Activated B cell treated with CpG ODN at 0.5 μM for 24 hours (primary cell): ENCODE measurements at regions of chr2 and their contacts with region 1.

Region 1: GRCh38 chr2:10122386-10123280 is at the start of gene RRM2:
- DNase-seq: peak; percentile 77
- ATAC-seq: peak; percentile 82
- H3K4me3 Mint-ChIP-seq: peak within 1 kb of the TSS; percentile 97
- H3K27ac Mint-ChIP-seq: peak within 1 kb of the TSS; percentile 12
- H3K4me1 Mint-ChIP-seq: peaks cover 35% of the 10 kb centered on the region
- H3K27me3 Mint-ChIP-seq: peaks cover 8% of the 10 kb centered on the region
- CTCF ChIP-seq: no peak
- total RNA-seq, gene RRM2: 8.6 and 9.3 TPM in 2 replicates

Region 2: GRCh38 chr2:8870441-8870840 is 1252.2 kb before region 1 on chr2:
- CTCF ChIA-PET with region 1: no interaction called
- POLR2A ChIA-PET with region 1: no interaction called
- intact Hi-C with region 1: no loop called
- DNase-seq: no peak
- ATAC-seq: no peak
- H3K4me3 Mint-ChIP-seq: no peak overlapping the region
- H3K27ac Mint-ChIP-seq: no peak overlapping the region
- H3K4me1 Mint-ChIP-seq: peaks cover 10% of the 10 kb centered on the region
- H3K27me3 Mint-ChIP-seq: no peaks in the 10 kb centered on the region
- CTCF ChIP-seq: no peak

Region 3: DNA sequence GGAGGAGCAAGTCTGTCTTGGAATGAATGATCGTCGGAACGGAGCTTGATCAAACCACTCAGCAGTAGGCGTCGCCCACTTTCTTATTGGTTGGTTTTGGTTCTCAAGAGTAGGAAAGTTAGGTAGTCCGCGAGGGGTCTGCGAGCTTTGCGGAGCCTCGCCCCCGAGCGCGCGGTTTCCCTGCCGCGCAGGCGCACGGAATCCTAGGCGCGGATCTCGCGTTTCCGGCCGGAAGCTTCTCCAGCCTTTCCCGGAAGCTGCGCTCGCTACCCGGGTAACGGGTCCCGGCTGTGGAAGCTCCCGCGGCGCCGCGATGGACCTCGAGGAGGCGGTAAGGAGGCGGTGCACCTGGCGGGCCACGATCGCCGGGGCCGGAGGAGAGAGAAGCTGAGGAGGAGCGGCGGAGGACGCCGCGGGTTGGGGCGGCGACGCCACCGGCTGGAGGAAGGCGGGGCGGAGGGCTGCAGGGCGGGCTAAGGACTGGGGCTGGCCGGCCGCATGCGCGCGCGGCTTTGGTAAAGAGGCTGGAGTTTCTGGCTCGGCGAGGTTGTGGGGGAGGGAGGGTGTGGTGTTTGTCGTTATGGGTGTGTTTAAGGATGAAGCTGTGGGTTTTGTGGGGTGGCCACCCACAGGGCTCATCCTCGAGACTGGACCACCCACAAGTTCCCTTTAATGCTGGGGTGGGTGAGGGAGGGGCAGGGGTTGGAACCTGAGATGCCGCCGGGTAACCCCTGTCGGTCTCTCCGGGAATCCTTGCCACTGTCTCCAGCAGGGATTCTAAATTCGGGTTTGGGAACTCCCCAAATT is 279.2 kb before region 1 on chr2 and contains the start of gene TAF1B:
- CTCF ChIA-PET with region 1: no interaction called
- POLR2A ChIA-PET with region 1: no interaction called
- intact Hi-C with region 1: loop called (anchors 2 kb)
- DNase-seq: peak; percentile 86
- ATAC-seq: peak; percentile 87
- H3K4me3 Mint-ChIP-seq: peak within 1 kb of the TSS; percentile 94
- H3K27ac Mint-ChIP-seq: peak within 1 kb of the TSS; percentile 91
- H3K4me1 Mint-ChIP-seq: peaks cover 34% of the 10 kb centered on the region
- H3K27me3 Mint-ChIP-seq: no peaks in the 10 kb centered on the region
- CTCF ChIP-seq: no peak
- total RNA-seq, gene TAF1B: 26.4 and 28.7 TPM in 2 replicates

Region 4: GRCh38 chr2:9984217-9984739 is 138.4 kb before region 1 on chr2:
- CTCF ChIA-PET with region 1: interaction called, 3 read pairs
- POLR2A ChIA-PET with region 1: no interaction called
- intact Hi-C with region 1: loop called (anchors 10 kb)
- DNase-seq: no peak
- ATAC-seq: peak; percentile 86
- H3K4me3 Mint-ChIP-seq: no peak overlapping the region
- H3K27ac Mint-ChIP-seq: no peak overlapping the region
- H3K4me1 Mint-ChIP-seq: peaks cover 6% of the 10 kb centered on the region
- H3K27me3 Mint-ChIP-seq: peaks cover 16% of the 10 kb centered on the region
- CTCF ChIP-seq: no peak

Region 5: DNA sequence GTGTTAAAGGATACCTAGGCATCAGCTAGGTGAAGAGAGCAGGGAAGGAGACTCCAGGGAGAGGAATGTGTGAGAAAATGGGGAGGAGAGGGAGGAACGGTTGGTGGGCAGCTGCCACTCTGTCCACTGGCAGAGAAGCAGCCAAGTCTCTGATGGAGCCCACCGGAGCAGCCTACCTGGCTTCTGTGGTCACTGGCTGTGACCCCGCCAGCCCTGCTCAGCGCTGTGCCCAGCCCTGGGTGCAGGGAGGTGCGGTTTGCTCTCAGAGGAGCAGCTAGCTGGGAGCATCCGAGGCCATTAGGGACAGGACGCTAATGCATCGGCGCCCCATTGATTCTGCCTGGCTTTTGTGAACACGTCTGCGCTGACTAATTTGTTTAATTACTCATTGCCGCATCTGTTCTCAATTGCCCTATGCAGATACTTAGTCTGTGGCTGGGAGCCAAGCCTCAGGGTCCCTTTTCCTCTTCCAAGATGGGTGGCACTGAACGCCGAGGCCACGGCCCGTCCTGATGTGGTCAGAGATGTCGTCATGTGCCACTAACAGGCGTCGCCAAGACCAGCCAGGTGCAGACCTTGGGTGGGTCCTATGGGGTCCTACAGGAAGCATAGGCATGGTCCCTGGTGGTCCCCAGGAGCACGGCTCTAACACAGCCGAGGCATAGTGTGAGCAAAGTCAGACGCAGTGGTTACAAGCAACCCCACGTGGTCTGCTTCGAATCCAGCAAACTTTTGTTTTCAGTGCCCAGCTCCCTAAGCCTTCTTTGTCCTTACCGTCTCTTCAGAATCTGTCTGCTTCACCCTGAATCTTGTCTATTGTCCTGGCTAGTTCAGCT is 81.9 kb after region 1 on chr2:
- CTCF ChIA-PET with region 1: no interaction called
- POLR2A ChIA-PET with region 1: no interaction called
- intact Hi-C with region 1: no loop called
- DNase-seq: no peak
- ATAC-seq: no peak
- H3K4me3 Mint-ChIP-seq: no peak overlapping the region
- H3K27ac Mint-ChIP-seq: no peak overlapping the region
- H3K4me1 Mint-ChIP-seq: no peaks in the 10 kb centered on the region
- H3K27me3 Mint-ChIP-seq: no peaks in the 10 kb centered on the region
- CTCF ChIP-seq: no peak

Region 6: DNA sequence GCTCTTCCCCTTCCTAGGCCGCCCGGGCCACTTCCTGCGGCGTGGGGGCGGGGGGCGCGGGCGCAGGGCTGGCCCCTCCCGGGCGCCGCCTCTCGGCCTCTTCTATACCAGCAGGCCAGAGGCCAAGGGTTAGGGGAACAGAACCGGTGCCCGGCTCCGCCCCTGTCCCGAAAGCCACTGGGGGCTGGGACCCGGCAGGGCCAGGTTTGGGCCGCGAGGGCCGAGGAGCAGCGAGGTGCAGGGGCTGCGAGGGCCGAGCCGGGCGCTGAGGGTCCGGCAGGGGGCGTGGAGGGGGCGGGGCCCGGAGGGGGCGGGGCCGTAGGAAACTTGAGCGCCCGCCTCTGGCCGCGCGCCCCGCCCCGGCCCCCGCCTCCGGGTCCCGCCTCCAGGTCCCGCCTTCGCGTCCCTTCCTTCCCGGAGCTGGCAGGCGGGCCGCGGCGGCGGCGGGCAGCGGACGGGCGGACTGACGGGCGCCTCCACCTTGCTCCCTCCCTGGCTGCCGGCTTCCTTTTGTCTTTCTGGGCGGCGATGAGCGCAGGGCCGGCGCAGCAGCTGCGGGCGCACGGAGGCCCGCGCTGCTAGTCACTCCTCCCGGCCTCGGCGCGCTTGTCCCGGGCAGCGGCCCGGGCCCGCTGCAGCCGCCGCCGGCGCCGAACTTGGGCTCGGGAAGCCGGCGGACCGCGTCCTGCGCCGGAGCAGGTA is 180.0 kb after region 1 on chr2 and contains the start of gene HPCAL1:
- CTCF ChIA-PET with region 1: interaction called, 5 read pairs
- POLR2A ChIA-PET with region 1: no interaction called
- intact Hi-C with region 1: loop called (anchors 1 kb)
- DNase-seq: peak; percentile 87
- ATAC-seq: peak; percentile 84
- H3K4me3 Mint-ChIP-seq: peak within 1 kb of the TSS; percentile 96
- H3K27ac Mint-ChIP-seq: peak within 1 kb of the TSS; percentile 80
- H3K4me1 Mint-ChIP-seq: peaks cover 58% of the 10 kb centered on the region
- H3K27me3 Mint-ChIP-seq: no peaks in the 10 kb centered on the region
- CTCF ChIP-seq: no peak
- total RNA-seq, gene HPCAL1: 15.2 and 15.9 TPM in 2 replicates